OCI-LY7 (cell line): ENCODE measurements at regions of chr13 and their contacts with region 1.

Region 1: GRCh38 chr13:41916173-41916954 is 44.5 kb downstream of the VWA8 start:
- DNase-seq: peak; percentile 94
- H3K4me3 ChIP-seq: peak overlapping the region; percentile 42
- H3K27ac ChIP-seq: peak overlapping the region; percentile 87
- H3K4me1 ChIP-seq: peaks cover 60% of the 10 kb centered on the region
- CTCF ChIP-seq: no peak

Region 2: GRCh38 chr13:41465241-41465847 is 451.0 kb before region 1 on chr13:
- CTCF ChIA-PET with region 1: no interaction called
- POLR2A ChIA-PET with region 1: no interaction called
- intact Hi-C with region 1: loop called (anchors 5 kb)
- DNase-seq: peak; percentile 94
- H3K4me3 ChIP-seq: peak overlapping the region; percentile 85
- H3K27ac ChIP-seq: peak overlapping the region; percentile 95
- H3K4me1 ChIP-seq: peaks cover 71% of the 10 kb centered on the region
- CTCF ChIP-seq: no peak

Region 3: DNA sequence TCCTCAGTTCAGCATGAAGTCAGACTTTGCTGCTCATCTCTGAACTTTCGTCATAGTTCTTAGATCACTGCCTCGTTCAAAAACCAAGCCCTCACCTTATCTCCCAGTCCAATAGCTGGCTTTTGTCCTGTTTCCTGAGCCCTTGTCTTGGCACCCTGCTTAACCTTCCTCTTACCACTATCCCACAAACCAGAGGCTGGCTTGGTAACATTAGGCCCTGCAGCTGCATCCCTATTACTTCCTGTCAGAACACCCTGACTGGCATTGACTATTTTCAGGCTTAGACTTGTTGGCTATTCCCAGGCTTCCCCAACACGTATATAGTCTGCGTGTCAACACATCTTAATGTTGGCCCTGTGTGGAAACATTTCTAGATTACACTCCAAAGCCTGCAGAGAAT is 127.8 kb before region 1 on chr13:
- CTCF ChIA-PET with region 1: no interaction called
- POLR2A ChIA-PET with region 1: no interaction called
- intact Hi-C with region 1: no loop called
- DNase-seq: no peak
- H3K4me3 ChIP-seq: no peak overlapping the region
- H3K27ac ChIP-seq: no peak overlapping the region
- H3K4me1 ChIP-seq: no peaks in the 10 kb centered on the region
- CTCF ChIP-seq: no peak

Region 4: GRCh38 chr13:41960639-41961465 is 44.5 kb after region 1 on chr13 and contains the start of gene VWA8:
- CTCF ChIA-PET with region 1: no interaction called
- POLR2A ChIA-PET with region 1: interaction called, 21 read pairs
- intact Hi-C with region 1: loop called (anchors 2 kb)
- DNase-seq: peak; percentile 91
- H3K4me3 ChIP-seq: peak within 1 kb of the TSS; percentile 92
- H3K27ac ChIP-seq: peak within 1 kb of the TSS; percentile 60
- H3K4me1 ChIP-seq: peaks cover 31% of the 10 kb centered on the region
- CTCF ChIP-seq: no peak
- total RNA-seq, gene VWA8: 16.1 and 26.4 TPM in 2 replicates

Region 5: DNA sequence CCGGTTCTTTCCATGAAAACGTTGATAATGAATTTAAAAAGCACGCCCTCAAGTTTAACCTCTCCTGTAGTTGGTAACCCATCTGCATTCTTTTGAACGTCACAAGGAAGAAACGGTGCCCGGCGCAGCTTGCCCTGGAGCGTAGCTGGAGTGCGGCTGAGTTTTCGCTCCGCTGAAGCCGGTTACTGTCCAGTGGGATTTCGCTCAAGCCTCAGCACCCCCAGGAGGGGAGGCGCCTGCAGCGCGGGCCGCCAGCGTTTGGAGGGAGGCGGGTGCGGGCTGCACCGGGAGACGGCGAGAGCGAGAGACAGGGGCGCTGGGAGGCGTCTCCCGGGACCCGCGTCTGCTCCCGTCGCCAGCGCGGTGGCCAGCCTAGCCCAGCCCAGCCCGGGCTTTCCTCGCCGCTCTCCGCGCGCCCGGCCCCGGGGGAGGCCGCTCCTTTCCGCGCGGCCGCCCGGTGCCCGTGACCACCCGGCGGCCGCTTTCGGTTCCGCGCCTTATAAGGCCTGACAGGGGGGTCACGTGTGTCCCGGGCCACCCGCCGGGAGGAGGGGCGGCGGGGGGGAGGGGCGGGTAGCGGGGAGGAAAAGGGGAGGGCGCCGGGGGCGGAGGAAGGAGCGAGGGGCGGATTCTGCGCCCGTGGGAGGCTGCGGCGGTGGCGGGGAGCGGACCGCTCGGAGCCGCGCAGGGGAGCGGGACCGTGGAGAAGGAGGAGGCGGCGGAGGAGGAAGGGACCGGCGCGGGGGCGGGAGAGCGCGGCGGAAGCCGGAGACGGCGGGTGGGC is 123.8 kb after region 1 on chr13:
- CTCF ChIA-PET with region 1: no interaction called
- POLR2A ChIA-PET with region 1: interaction called, 3 read pairs
- intact Hi-C with region 1: loop called (anchors 2 kb)
- DNase-seq: peak; percentile 92
- H3K4me3 ChIP-seq: peak overlapping the region; percentile 71
- H3K27ac ChIP-seq: peak overlapping the region; percentile 10
- H3K4me1 ChIP-seq: peaks cover 14% of the 10 kb centered on the region
- CTCF ChIP-seq: 0 out of 2 replicates have a peak, but pooled peaks have one; percentile 15

Region 6: DNA sequence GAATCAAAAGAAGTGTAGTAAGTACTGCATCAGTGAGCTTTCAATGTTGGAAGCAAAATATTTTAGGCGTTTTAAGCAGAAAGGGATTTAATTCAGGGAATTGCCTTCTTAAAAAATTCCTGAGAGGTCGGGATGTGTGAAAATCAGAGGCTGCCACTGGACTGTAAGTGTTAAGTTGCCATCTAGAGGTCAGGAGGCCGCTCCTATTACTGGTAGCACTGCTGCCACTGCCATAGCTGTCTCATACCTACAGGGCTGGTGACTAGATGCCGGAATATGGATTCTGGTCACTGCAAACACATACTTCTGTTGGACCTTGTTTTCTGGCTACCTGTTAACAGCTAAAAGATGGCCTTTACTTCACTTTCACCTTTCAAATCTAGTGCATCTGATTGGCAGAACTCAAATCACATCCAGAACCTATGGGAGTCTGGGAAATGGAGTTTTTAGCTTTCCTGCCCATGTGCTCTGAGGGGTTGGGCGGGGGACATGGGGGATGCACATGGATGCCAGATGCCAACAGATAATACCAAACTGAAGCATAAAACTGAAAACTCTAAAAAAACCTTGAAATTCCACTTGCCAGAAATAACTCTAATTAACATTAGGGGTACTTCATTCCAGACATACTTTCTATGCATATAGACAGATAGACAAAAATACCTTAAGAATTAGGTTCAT is 161.9 kb after region 1 on chr13:
- CTCF ChIA-PET with region 1: no interaction called
- POLR2A ChIA-PET with region 1: no interaction called
- intact Hi-C with region 1: no loop called
- DNase-seq: peak; percentile 4
- H3K4me3 ChIP-seq: no peak overlapping the region
- H3K27ac ChIP-seq: no peak overlapping the region
- H3K4me1 ChIP-seq: no peaks in the 10 kb centered on the region
- CTCF ChIP-seq: peak; percentile 37; the same call in 1 of the 2 replicates